ENCODE measurements at regions of chr5 and their contacts with region 1.

Region 1: GRCh38 chr5:96582343-96582742 is 79.8 kb upstream of the CAST start:
- DNase-seq: no peak
- ATAC-seq: no peak
- H3K4me3 ChIP-seq: no peak overlapping the region
- H3K4me3 Mint-ChIP-seq: no peak overlapping the region
- H3K27ac ChIP-seq: no peak overlapping the region
- H3K27ac Mint-ChIP-seq: no peak overlapping the region
- H3K4me1 ChIP-seq: peaks cover 0 to 4% of the 10 kb centered on the region in 2 experiments
- H3K4me1 Mint-ChIP-seq: peaks cover 7 to 11% (median 8%) of the 10 kb centered on the region in 3 donors
- H3K27me3 ChIP-seq: peaks cover 0 to 4% of the 10 kb centered on the region in 2 experiments
- H3K27me3 Mint-ChIP-seq: peaks cover 29 to 30% of the 10 kb centered on the region in 2 donors

Region 2: DNA sequence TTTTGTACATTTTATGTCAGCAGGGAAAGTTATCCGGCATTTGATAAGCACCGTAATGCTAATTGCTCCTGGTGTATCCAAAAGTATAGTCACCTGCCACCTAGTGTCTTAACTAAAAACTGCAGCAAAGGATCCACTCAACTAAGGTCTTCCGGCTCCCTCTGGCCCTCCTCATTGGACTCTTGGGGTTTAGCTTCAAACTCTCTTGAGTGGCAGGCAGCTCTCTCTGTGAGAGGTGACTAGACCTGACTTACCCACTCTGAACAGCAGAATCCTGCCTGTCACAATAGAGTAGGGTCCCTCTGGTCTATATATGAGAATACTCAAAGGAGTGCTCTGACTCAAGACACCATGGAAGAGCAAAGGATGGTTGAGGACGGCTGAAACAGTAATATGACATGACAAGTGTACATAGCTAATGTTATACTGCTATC is 19.5 kb after region 1 on chr5:
- CTCF ChIA-PET with region 1: interaction called, 4 to 18 read pairs
- POLR2A ChIA-PET with region 1: no interaction called
- DNase-seq: peak in 27 of 35 experiments; percentile 8 to 81 (median 31)
- ATAC-seq: peak; percentile 66 to 80 (median 76)
- H3K4me3 ChIP-seq: no peak overlapping the region
- H3K4me3 Mint-ChIP-seq: no peak overlapping the region
- H3K27ac ChIP-seq: no peak overlapping the region
- H3K27ac Mint-ChIP-seq: no peak overlapping the region
- H3K4me1 ChIP-seq: no peaks in the 10 kb centered on the region
- H3K4me1 Mint-ChIP-seq: peaks cover 0 to 3% (median 2%) of the 10 kb centered on the region in 3 donors
- H3K27me3 ChIP-seq: no peaks in the 10 kb centered on the region
- H3K27me3 Mint-ChIP-seq: peaks cover 8 to 12% of the 10 kb centered on the region in 2 donors